ENCODE measurements at regions of chr10 and their contacts with region 1.

Region 1: DNA sequence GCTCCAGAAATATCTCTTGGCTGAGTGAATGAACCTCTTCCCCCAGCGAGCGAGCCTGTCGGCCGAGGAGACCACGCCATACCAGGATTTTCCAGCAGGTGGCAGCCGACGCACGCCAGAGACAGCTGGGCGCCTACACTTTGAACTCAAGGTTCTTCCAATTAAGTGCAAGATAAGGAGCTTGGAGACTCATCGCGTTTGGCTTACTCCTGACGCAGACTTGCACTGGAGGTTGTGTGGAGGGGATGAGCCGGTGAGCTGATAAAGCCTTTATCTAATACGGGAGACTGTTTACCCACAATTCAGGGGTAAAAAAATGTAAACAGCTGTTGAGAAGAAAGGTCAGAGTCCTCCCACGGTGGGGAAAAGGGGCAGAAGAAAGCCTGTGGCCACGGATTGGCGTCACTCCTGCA is 45.9 kb upstream of the EMX2 start:
- H3K4me3 ChIP-seq: no peak overlapping the region
- H3K27ac ChIP-seq: no peak overlapping the region
- H3K4me1 ChIP-seq: no peaks in the 10 kb centered on the region
- CTCF ChIP-seq: peak; percentile 83

Region 2: GRCh38 chr10:117431160-117431559 is 65.5 kb before region 1 on chr10:
- CTCF ChIA-PET with region 1: interaction called, 11 read pairs
- POLR2A ChIA-PET with region 1: no interaction called
- H3K4me3 ChIP-seq: no peak overlapping the region
- H3K27ac ChIP-seq: no peak overlapping the region
- H3K4me1 ChIP-seq: no peaks in the 10 kb centered on the region
- CTCF ChIP-seq: 0 out of 2 replicates have a peak, but pooled peaks have one; percentile 17

Region 3: GRCh38 chr10:117537436-117537903 is 40.8 kb after region 1 on chr10:
- CTCF ChIA-PET with region 1: interaction called, 23 read pairs
- POLR2A ChIA-PET with region 1: no interaction called
- H3K4me3 ChIP-seq: peak overlapping the region; percentile 14; the same call in 1 of the 2 replicates
- H3K27ac ChIP-seq: no peak overlapping the region
- H3K4me1 ChIP-seq: peaks cover 5% of the 10 kb centered on the region
- CTCF ChIP-seq: no peak

Region 4: GRCh38 chr10:117574498-117575146 is 78.0 kb after region 1 on chr10:
- CTCF ChIA-PET with region 1: no interaction called
- POLR2A ChIA-PET with region 1: no interaction called
- H3K4me3 ChIP-seq: no peak overlapping the region
- H3K27ac ChIP-seq: no peak overlapping the region
- H3K4me1 ChIP-seq: no peaks in the 10 kb centered on the region
- CTCF ChIP-seq: no peak

Region 5: GRCh38 chr10:118259288-118259906 is 762.8 kb after region 1 on chr10:
- CTCF ChIA-PET with region 1: interaction called, 18 read pairs
- POLR2A ChIA-PET with region 1: no interaction called
- H3K4me3 ChIP-seq: no peak overlapping the region
- H3K27ac ChIP-seq: no peak overlapping the region
- H3K4me1 ChIP-seq: no peaks in the 10 kb centered on the region; the same call in 1 of the 2 replicates
- CTCF ChIP-seq: peak; percentile 46; the same call in 1 of the 2 replicates

Region 6: DNA sequence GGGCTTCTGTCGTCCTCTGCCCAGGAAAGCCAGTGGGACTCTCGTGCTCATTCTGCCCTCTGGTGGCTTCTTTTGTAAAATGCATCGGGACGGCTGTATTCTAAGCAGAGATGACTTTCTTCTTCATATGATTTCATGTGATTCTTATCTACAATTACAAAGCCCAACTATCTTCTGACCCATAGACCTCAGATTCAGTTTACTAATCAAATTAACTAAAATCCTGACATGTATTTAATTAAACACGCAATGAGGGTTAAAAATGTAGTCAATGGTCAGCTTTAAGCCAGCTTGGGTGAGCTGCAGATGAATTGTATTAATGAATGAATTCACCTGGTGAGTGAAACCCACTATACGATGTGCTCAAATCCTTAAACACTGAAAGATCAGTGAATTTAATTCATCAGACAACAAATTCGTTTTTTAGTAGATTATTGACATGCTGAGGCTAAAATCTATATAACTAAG is 963.1 kb after region 1 on chr10:
- CTCF ChIA-PET with region 1: interaction called, 23 read pairs
- POLR2A ChIA-PET with region 1: no interaction called
- H3K4me3 ChIP-seq: no peak overlapping the region
- H3K27ac ChIP-seq: no peak overlapping the region
- H3K4me1 ChIP-seq: 0 out of 2 replicates have a peak, but pooled peaks cover 3% of the 10 kb centered on the region
- CTCF ChIP-seq: peak; percentile 62